ENCODE measurements at regions of chr3 and their contacts with region 1.

Region 1: DNA sequence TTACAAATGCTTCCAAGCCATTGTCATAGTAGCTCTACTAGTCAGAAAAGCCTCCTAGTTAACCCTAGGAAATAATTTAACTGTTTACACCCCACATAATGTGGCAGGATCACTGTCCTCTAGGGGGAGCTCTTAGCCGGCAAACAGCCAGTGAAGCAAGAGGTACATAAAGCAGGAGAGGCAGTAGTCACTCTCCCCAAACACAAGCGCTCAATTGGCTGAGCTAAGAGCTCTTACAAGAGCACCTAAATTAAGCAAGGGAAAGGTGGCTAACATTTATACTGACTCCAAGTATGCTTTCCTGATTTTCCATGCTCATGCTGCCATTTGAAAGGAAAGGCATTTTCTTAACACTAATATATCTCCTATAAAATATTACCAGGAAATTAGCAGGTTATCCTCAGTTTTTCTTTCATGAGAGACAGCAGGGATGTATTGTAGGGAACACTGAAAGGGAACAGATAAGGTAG is 37.6 kb downstream of the NCEH1 start:
- DNase-seq: peak; percentile 85
- ATAC-seq: peak; percentile 94
- H3K4me3 Mint-ChIP-seq: no peak overlapping the region
- H3K27ac Mint-ChIP-seq: no peak overlapping the region
- H3K4me1 Mint-ChIP-seq: no peaks in the 10 kb centered on the region
- H3K27me3 Mint-ChIP-seq: no peaks in the 10 kb centered on the region

Region 2: GRCh38 chr3:172658344-172659245 is 14.7 kb before region 1 on chr3:
- CTCF ChIA-PET with region 1: interaction called, 10 read pairs
- POLR2A ChIA-PET with region 1: no interaction called
- intact Hi-C with region 1: no loop called
- DNase-seq: no peak
- ATAC-seq: no peak
- H3K4me3 Mint-ChIP-seq: no peak overlapping the region
- H3K27ac Mint-ChIP-seq: no peak overlapping the region
- H3K4me1 Mint-ChIP-seq: no peaks in the 10 kb centered on the region
- H3K27me3 Mint-ChIP-seq: no peaks in the 10 kb centered on the region

Region 3: GRCh38 chr3:172685346-172686214 is 12.3 kb after region 1 on chr3:
- CTCF ChIA-PET with region 1: interaction called, 15 read pairs
- POLR2A ChIA-PET with region 1: no interaction called
- intact Hi-C with region 1: no loop called
- DNase-seq: no peak
- ATAC-seq: peak; percentile 89
- H3K4me3 Mint-ChIP-seq: no peak overlapping the region
- H3K27ac Mint-ChIP-seq: peak overlapping the region; percentile 48
- H3K4me1 Mint-ChIP-seq: peaks cover 12% of the 10 kb centered on the region
- H3K27me3 Mint-ChIP-seq: no peaks in the 10 kb centered on the region

Region 4: GRCh38 chr3:172692751-172693338 is 19.6 kb after region 1 on chr3:
- CTCF ChIA-PET with region 1: interaction called, 13 read pairs
- POLR2A ChIA-PET with region 1: no interaction called
- intact Hi-C with region 1: no loop called
- DNase-seq: no peak
- ATAC-seq: no peak
- H3K4me3 Mint-ChIP-seq: no peak overlapping the region
- H3K27ac Mint-ChIP-seq: no peak overlapping the region
- H3K4me1 Mint-ChIP-seq: peaks cover 6% of the 10 kb centered on the region
- H3K27me3 Mint-ChIP-seq: no peaks in the 10 kb centered on the region

Region 5: GRCh38 chr3:172710664-172711453 is 37.6 kb after region 1 on chr3 and contains the start of gene NCEH1:
- CTCF ChIA-PET with region 1: interaction called, 12 read pairs
- POLR2A ChIA-PET with region 1: no interaction called
- intact Hi-C with region 1: loop called (anchors 1 kb)
- DNase-seq: peak; percentile 86
- ATAC-seq: peak; percentile 99
- H3K4me3 Mint-ChIP-seq: peak within 1 kb of the TSS; percentile 94
- H3K27ac Mint-ChIP-seq: peak within 1 kb of the TSS; percentile 58
- H3K4me1 Mint-ChIP-seq: peaks cover 18% of the 10 kb centered on the region
- H3K27me3 Mint-ChIP-seq: no peaks in the 10 kb centered on the region
- total RNA-seq, gene NCEH1: 4.9 to 6.3 TPM